Activated CD4-positive, alpha-beta memory T cell treated with anti-CD3 and anti-CD28 coated beads for 36 hours (primary cell): ENCODE measurements at regions of chr6 and their contacts with region 1.

Region 1: GRCh38 chr6:135909737-135910387 is 58.4 kb downstream of the PDE7B start:
- DNase-seq: peak; percentile 60
- H3K4me3 Mint-ChIP-seq: no peak overlapping the region
- H3K27ac Mint-ChIP-seq: no peak overlapping the region
- H3K4me1 Mint-ChIP-seq: peaks cover 2% of the 10 kb centered on the region
- H3K27me3 Mint-ChIP-seq: no peaks in the 10 kb centered on the region

Region 2: DNA sequence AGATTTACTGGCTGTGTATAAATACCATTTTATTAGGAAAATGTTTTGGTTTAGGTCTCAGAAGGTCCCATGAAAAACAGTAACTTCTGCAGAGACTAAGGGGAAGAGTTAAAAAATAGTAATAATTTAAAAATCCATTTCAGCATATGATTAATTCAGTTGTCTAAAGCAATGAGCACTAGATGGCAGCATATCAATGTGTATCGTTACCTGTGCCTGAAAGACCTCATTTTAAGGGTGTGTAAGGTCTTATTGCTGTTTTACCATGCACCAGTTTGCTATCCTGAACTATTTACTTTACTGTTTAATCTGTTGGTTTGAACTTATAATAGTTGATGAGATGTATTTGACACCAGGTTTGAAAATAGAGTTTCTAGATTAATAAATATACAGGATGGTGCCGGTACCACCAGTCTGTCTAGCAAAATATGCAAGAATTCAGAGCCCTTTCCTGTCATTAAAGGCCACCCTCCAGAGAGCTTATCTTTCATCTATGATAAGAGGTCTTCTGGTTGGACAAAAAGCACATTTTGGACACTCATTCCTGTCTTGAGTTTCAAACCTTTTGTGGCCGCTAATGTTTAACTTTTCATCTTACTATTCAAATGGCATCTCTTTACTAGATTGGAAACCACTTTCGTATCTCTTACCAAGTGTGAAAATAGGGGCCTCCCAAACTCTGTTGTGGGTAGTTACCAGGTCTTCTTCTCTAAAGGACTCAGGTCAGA is 403.4 kb before region 1 on chr6:
- CTCF ChIA-PET with region 1: interaction called, 11 read pairs
- POLR2A ChIA-PET with region 1: no interaction called
- intact Hi-C with region 1: loop called (anchors 1 kb)
- DNase-seq: no peak
- H3K4me3 Mint-ChIP-seq: no peak overlapping the region
- H3K27ac Mint-ChIP-seq: no peak overlapping the region
- H3K4me1 Mint-ChIP-seq: peaks cover 6% of the 10 kb centered on the region
- H3K27me3 Mint-ChIP-seq: peaks cover under 1% of the 10 kb centered on the region

Region 3: DNA sequence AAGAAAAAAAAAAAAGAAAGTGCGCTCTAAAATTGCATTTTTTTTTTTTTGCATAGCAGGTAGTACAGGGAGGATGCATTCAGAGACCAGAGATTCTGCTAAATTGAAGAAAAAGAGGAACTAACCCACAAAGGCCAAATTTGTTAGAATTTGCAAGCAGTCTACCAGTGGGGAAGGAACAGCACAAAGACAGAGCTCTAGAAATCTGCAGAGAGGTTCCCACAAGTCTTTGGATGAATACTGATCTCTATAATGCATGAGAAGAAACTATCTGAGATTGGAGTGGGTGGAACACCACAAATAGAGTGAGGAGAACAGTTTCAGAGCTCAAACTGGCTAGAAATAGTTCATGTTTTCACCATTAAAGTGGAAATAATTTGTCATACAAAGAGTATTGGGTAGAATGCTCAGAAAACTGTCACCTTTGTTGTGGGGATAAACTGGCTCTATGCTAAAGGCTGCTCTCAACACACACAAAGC is 332.8 kb before region 1 on chr6:
- CTCF ChIA-PET with region 1: no interaction called
- POLR2A ChIA-PET with region 1: no interaction called
- intact Hi-C with region 1: no loop called
- DNase-seq: no peak
- H3K4me3 Mint-ChIP-seq: no peak overlapping the region
- H3K27ac Mint-ChIP-seq: peak overlapping the region; percentile 42
- H3K4me1 Mint-ChIP-seq: peaks cover 19% of the 10 kb centered on the region
- H3K27me3 Mint-ChIP-seq: no peaks in the 10 kb centered on the region

Region 4: GRCh38 chr6:135675862-135676261 is 234.0 kb before region 1 on chr6:
- CTCF ChIA-PET with region 1: interaction called, 23 read pairs
- POLR2A ChIA-PET with region 1: no interaction called
- intact Hi-C with region 1: loop called (anchors 1 kb)
- DNase-seq: peak; percentile 13
- H3K4me3 Mint-ChIP-seq: no peak overlapping the region
- H3K27ac Mint-ChIP-seq: no peak overlapping the region
- H3K4me1 Mint-ChIP-seq: no peaks in the 10 kb centered on the region
- H3K27me3 Mint-ChIP-seq: no peaks in the 10 kb centered on the region

Region 5: DNA sequence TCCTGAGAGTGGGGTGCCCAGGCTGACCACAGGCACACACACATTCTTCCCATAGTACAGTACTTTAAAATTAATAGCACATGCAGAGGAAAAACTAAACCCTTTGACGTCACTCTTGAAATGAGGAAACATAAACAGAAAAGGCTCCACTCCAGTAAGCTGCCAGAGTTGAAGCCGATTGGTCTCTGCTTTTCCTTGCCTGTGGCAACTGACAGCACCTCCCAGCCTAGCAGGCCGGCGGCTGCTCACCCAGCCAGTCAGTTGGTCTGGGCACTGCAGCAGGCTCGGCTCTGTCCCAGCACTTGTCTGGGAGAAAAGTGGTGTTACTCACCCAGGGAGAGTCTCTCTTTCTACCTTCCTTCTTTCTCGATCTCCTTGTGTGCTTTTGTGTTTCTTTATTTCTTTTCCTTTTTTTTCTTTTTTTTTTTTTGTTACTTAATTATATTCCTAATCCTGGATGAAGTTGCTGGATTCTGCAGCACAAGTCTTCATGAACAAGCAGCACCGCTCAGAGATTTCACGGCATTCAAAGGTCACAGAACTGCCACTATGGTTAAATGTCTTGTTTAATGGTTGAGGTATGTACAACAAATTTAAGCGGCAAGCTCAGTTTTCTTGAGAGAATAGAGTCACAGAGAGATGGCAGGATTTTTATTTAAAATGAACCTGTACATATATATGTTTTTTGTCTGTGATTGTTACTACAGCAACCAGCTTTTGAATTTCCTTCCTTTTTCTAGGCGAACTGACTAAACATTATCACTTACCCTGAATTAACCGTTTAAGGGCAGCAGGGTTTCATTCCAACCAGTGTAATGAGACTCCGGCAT is 58.2 kb before region 1 on chr6 and contains the start of gene PDE7B:
- CTCF ChIA-PET with region 1: interaction called, 10 read pairs
- POLR2A ChIA-PET with region 1: no interaction called
- intact Hi-C with region 1: no loop called
- DNase-seq: peak; percentile 53
- H3K4me3 Mint-ChIP-seq: peak within 1 kb of the TSS; percentile 38
- H3K27ac Mint-ChIP-seq: no peak within 1 kb of the TSS
- H3K4me1 Mint-ChIP-seq: peaks cover 17% of the 10 kb centered on the region
- H3K27me3 Mint-ChIP-seq: peaks cover 1% of the 10 kb centered on the region
- total RNA-seq, gene PDE7B: 0.05 to 0.12 TPM

Region 6: DNA sequence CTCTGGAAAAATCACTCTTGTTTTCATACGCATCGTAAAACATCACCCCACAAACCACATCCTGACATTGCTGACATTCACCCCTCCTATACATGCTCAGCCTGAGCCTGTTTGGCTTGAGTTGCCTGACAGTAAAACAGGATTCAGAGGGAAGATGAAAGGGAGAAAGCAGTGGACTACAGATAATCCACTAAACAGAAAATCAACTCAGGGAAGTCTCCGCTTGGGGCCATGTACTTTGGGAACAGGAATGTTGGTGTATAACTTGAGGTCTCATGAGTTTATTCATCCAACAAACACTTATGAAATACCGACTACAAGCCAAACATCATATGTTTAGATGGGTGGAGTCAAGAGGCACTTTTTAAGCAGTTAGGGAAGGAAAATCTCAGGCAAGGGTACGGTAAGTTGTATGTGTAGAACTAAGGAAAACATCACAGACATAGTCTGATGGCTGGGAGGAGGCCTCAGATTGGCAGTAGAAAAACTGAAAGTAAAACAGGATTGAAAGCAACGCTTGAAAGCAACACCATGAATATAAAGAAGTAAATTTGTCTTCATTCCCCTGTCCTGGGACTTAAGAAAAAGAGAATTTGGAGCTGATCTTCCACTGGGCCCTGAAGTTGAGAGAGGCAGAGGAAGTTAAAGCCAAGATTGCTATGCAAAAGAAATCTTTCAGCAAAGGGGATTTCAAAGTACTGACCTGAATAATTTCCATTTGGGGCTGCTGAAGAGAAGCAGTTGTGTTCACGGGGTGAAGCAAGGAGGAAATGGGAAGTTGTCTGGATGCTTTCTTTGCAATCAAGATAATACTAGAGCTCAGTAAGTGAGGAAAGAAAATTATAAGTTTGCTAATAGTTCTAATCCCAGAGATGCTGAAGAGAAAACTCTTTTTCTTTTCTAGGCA is 29.5 kb before region 1 on chr6:
- CTCF ChIA-PET with region 1: interaction called, 13 read pairs
- POLR2A ChIA-PET with region 1: no interaction called
- intact Hi-C with region 1: no loop called
- DNase-seq: peak; percentile 65
- H3K4me3 Mint-ChIP-seq: peak overlapping the region; percentile 72
- H3K27ac Mint-ChIP-seq: peak overlapping the region; percentile 94
- H3K4me1 Mint-ChIP-seq: peaks cover 35% of the 10 kb centered on the region
- H3K27me3 Mint-ChIP-seq: no peaks in the 10 kb centered on the region

Region 7: GRCh38 chr6:135922174-135922573 is 12.3 kb after region 1 on chr6:
- CTCF ChIA-PET with region 1: interaction called, 15 read pairs
- POLR2A ChIA-PET with region 1: interaction called, 4 read pairs
- intact Hi-C with region 1: no loop called
- DNase-seq: no peak
- H3K4me3 Mint-ChIP-seq: no peak overlapping the region
- H3K27ac Mint-ChIP-seq: no peak overlapping the region
- H3K4me1 Mint-ChIP-seq: no peaks in the 10 kb centered on the region
- H3K27me3 Mint-ChIP-seq: peaks cover 6% of the 10 kb centered on the region

Region 8: DNA sequence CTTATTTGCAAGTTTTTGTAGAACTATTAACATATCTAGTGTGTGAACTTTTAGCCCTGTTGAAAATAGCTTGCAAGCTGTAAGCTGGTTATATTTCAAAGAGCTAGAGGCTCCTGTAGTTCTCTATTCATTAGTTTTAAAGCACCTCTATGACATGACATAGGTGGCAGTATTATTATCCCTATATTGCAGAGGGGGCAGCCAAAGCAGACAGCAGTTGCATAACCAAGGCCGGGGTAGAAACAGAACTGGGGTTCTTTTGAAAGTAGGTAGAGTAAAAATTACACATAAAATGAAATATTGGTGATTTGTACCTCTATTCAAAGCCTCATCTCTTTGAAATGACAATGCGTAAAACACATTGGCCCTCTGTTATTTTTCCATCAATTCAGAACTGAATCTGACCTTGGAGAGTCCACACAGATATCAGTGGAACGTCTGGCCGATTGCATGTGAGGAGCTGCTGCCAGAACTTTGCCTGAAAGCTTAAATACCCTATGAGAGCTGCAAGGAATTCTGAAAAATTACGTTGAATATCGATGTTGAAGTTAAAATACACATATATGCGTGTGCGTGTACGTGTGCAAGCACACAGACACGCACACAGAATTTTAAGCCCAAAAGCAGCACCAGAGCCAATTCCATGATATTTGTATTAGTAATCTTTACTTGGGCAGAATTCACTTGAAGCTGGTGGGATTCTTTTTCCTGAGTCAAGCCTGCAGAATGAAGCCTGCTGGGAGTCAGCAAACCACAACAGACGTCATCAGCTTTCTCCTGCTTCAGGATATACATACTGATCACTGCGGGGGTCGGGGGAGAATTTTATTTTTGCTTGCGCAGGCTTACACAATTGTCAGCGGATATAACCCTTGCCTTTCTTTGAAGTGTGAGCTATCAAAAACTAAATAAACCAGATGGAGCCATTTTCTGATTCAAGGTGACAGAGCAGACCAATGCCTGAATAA is 104.9 kb after region 1 on chr6:
- CTCF ChIA-PET with region 1: no interaction called
- POLR2A ChIA-PET with region 1: no interaction called
- intact Hi-C with region 1: no loop called
- DNase-seq: no peak
- H3K4me3 Mint-ChIP-seq: no peak overlapping the region
- H3K27ac Mint-ChIP-seq: no peak overlapping the region
- H3K4me1 Mint-ChIP-seq: no peaks in the 10 kb centered on the region
- H3K27me3 Mint-ChIP-seq: peaks cover 4% of the 10 kb centered on the region

Region 9: GRCh38 chr6:136737871-136738691 is 828.2 kb after region 1 on chr6:
- CTCF ChIA-PET with region 1: no interaction called
- POLR2A ChIA-PET with region 1: no interaction called
- intact Hi-C with region 1: no loop called
- DNase-seq: no peak
- H3K4me3 Mint-ChIP-seq: no peak overlapping the region
- H3K27ac Mint-ChIP-seq: no peak overlapping the region
- H3K4me1 Mint-ChIP-seq: peaks cover 29% of the 10 kb centered on the region
- H3K27me3 Mint-ChIP-seq: no peaks in the 10 kb centered on the region